GM13977 (cell line): ENCODE measurements at regions of chrX and their contacts with region 1.

Region 1: GRCh38 chrX:20515841-20516461 is 249.2 kb upstream of the RPS6KA3 start:
- DNase-seq: peak; percentile 17
- CTCF ChIP-seq: no peak

Region 2: DNA sequence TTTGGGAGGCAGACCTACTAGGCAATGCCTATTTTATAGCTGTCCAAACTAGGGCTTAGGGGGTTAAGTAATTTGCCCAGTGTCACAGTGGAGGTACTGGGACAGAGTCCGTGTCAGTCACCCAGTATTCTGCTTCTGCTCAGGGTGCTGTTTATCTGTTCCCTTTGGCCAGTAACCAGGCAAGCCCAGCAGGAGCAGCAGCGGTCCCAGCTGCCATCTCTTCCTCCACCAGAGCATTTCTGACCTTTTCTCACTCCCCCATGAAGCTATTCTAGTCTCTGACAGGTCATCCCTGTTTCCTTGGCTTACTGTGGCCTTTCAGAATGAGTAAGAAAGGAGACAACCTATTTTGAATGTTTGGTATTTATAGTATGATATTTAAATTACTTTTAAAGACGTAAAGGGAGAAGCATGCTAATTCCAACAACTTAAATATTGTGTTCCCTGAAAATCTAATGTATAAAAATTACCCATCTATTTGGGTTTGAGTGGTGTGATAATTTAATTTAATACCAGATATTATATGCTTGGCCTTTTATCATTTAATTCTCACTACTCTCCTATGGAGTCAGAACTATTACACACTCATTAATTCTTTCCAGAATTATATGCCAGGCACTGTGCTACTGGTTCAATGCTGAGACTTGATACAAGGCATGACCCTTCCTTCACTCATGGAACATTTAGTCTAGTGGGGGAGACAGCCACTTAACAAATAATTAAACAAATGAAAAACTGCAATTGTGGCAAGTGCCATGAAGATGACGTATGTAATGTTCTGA is 309.8 kb before region 1 on chrX:
- in situ Hi-C with region 1: no loop called
- DNase-seq: peak; percentile 8
- CTCF ChIP-seq: no peak

Region 3: GRCh38 chrX:21479695-21480270 is 963.8 kb after region 1 on chrX:
- in situ Hi-C with region 1: loop called (anchors 25 kb)
- DNase-seq: peak; percentile 23
- CTCF ChIP-seq: peak; percentile 66